Heart left ventricle (tissue), 16 donors: ENCODE measurements at regions of chr16 and their contacts with region 1.

Region 1: DNA sequence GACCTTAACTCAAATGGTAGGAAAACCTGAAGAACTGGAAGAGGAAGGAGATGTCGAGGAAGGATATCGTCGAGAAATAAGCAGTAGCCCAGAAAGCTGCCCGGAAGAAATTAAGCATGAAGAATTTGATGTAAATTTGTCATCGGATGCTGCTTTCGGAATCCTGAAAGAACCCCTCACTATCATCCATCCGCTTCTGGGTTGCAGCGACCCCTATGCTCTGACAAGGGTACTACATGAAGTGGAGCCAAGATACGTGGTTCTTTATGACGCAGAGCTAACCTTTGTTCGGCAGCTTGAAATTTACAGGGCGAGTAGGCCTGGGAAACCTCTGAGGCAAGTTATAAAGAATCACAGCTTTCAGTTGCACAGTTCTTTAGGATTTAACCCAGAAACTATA is 15.5 kb downstream of the ERCC4 start:
- DNase-seq: no peak
- ATAC-seq: no peak
- H3K4me3 ChIP-seq: no peak overlapping the region
- H3K27ac ChIP-seq: no peak overlapping the region
- H3K4me1 ChIP-seq: peaks cover 0 to 11% (median 5%) of the 10 kb centered on the region in 12 donors
- H3K27me3 ChIP-seq: no peaks in the 10 kb centered on the region
- CTCF ChIP-seq: peak in 9 of 12 donors; percentile 17 to 50 (median 36)
- POLR2A ChIP-seq: no peak

Region 2: DNA sequence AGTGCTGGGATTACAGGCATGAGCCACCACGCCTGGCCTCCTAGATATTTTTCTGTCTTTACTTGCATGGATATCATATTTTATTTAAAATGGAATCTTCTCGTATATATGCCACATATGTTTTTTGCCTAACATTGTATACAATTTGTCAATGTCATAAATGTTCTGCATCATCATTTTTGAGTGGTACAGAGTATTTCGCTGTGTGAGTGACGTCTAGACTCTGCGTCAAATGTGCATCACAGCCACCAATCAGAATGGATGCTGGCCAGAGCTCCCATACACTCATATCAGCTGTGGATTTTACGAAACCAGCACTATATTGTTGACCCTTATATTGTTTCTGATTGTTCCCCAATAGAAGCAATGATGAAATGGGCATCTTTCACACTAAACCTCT is 41.8 kb after region 1 on chr16:
- intact Hi-C with region 1: loop called in 1 of 10 experiments (anchors 5 kb)
- DNase-seq: no peak
- ATAC-seq: no peak
- H3K4me3 ChIP-seq: no peak overlapping the region
- H3K27ac ChIP-seq: no peak overlapping the region
- H3K4me1 ChIP-seq: no peaks in the 10 kb centered on the region
- H3K27me3 ChIP-seq: no peaks in the 10 kb centered on the region
- CTCF ChIP-seq: no peak
- POLR2A ChIP-seq: no peak

Region 3: GRCh38 chr16:13997933-13998332 is 62.5 kb after region 1 on chr16:
- intact Hi-C with region 1: loop called in 3 of 10 experiments (anchors 5 kb)
- DNase-seq: no peak
- ATAC-seq: no peak
- H3K4me3 ChIP-seq: no peak overlapping the region
- H3K27ac ChIP-seq: peak overlapping the region in 8 of 12 donors; percentile 14 to 90 (median 82)
- H3K4me1 ChIP-seq: peaks cover 0 to 70% (median 47%) of the 10 kb centered on the region in 12 donors
- H3K27me3 ChIP-seq: no peaks in the 10 kb centered on the region
- CTCF ChIP-seq: no peak
- POLR2A ChIP-seq: no peak

Region 4: GRCh38 chr16:14003074-14003570 is 67.7 kb after region 1 on chr16:
- intact Hi-C with region 1: loop called in 3 of 10 experiments (anchors 5 kb)
- DNase-seq: peak; percentile 74 to 83 (median 78)
- ATAC-seq: peak; percentile 41 to 75 (median 74)
- H3K4me3 ChIP-seq: peak overlapping the region in 11 of 12 donors; percentile 6 to 51 (median 37)
- H3K27ac ChIP-seq: peak overlapping the region in 11 of 12 donors; percentile 27 to 85 (median 74)
- H3K4me1 ChIP-seq: peaks cover 0 to 70% (median 47%) of the 10 kb centered on the region in 12 donors
- H3K27me3 ChIP-seq: no peaks in the 10 kb centered on the region
- CTCF ChIP-seq: peak in 6 of 12 donors; percentile 6 to 37 (median 24)
- POLR2A ChIP-seq: no peak

Region 5: DNA sequence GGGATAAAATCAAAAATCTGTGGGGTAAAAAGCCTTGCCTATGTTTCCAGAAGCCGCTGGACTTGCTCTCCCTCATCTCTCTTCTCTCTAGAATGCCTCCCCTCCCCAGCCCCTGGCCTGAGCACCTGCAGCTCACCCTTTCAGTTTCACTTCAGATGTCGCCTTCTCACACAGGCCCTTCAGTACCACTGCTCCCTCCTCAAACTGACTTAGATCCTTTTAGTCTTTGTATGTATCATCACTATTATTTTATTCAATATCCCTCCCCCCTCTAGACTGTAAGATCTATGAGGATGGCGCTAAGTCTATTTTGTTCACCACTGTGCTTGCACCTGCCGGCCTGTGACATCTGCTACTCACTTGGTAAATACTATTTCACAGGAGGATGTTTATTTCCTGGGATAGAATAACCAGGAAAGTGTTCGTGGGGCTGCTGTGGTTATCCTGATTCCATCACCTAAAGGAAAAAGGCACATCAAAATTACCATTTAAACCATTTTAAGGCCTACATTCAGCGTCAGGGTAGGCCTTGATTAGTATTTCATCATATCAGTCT is 258.0 kb after region 1 on chr16:
- intact Hi-C with region 1: loop called in 1 of 10 experiments (anchors 5 kb)
- DNase-seq: no peak
- ATAC-seq: no peak
- H3K4me3 ChIP-seq: peak overlapping the region in 2 of 12 donors; percentile 2 to 6
- H3K27ac ChIP-seq: peak overlapping the region in 3 of 12 donors; percentile 12 to 18 (median 15)
- H3K4me1 ChIP-seq: peaks cover 0 to 43% (median 16%) of the 10 kb centered on the region in 12 donors
- H3K27me3 ChIP-seq: no peaks in the 10 kb centered on the region
- CTCF ChIP-seq: no peak
- POLR2A ChIP-seq: no peak

Region 6: GRCh38 chr16:14325502-14326401 is 390.3 kb after region 1 on chr16:
- intact Hi-C with region 1: no loop called
- DNase-seq: peak in 2 of 5 donors; percentile 19 to 31
- ATAC-seq: peak; percentile 33 to 64 (median 53)
- H3K4me3 ChIP-seq: no peak overlapping the region
- H3K27ac ChIP-seq: peak overlapping the region in 10 of 12 donors; percentile 5 to 75 (median 44)
- H3K4me1 ChIP-seq: peaks cover 0 to 29% (median 12%) of the 10 kb centered on the region in 12 donors
- H3K27me3 ChIP-seq: no peaks in the 10 kb centered on the region
- CTCF ChIP-seq: no peak
- POLR2A ChIP-seq: no peak